PC-3 (cell line): ENCODE measurements at regions of chr7 and their contacts with region 1.

Region 1: DNA sequence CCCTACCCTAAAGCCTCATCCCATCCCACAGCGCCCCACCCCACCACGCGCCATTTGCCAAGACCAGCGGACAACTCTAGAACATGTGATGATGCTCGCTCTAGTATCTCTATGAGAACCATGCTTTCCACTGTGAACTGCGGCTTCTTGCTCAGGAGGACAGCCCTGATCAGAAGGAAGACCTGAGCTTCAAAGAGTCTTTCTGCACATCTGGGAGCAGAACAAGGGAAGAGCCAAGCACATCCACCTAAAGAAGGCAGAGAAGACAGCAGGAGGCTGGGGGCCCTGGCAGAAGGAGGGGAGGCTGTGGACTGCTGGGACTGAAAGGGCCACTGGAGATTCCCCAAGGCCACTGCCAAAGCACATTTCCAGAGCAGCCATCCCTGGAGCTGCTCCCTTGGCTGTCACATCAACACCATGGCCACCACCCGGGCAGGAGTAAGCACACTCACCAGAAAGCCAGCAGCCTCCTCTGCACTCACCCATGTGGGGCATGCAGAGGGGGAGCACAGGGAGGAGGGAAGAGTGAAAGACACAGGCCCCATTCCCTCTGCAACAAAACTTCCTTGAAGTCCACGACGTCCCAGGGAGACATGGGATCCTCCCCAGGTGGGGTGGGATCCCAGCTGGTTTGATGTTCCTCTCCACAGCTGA is 134.0 kb downstream of the TNS3 start:
- DNase-seq: no peak
- ATAC-seq: no peak
- H3K4me3 ChIP-seq: no peak overlapping the region
- H3K27ac ChIP-seq: no peak overlapping the region
- H3K4me1 ChIP-seq: peaks cover 25% of the 10 kb centered on the region
- H3K27me3 ChIP-seq: no peaks in the 10 kb centered on the region
- CTCF ChIP-seq: no peak

Region 2: GRCh38 chr7:47763063-47763974 is 315.5 kb after region 1 on chr7:
- CTCF ChIA-PET with region 1: no interaction called
- POLR2A ChIA-PET with region 1: interaction called, 12 read pairs
- intact Hi-C with region 1: no loop called
- DNase-seq: peak; percentile 90
- ATAC-seq: peak; percentile 90
- H3K4me3 ChIP-seq: peak overlapping the region; percentile 30; the same call in 1 of the 2 replicates
- H3K27ac ChIP-seq: peak overlapping the region; percentile 90
- H3K4me1 ChIP-seq: peaks cover 30% of the 10 kb centered on the region
- H3K27me3 ChIP-seq: no peaks in the 10 kb centered on the region
- CTCF ChIP-seq: no peak

Region 3: DNA sequence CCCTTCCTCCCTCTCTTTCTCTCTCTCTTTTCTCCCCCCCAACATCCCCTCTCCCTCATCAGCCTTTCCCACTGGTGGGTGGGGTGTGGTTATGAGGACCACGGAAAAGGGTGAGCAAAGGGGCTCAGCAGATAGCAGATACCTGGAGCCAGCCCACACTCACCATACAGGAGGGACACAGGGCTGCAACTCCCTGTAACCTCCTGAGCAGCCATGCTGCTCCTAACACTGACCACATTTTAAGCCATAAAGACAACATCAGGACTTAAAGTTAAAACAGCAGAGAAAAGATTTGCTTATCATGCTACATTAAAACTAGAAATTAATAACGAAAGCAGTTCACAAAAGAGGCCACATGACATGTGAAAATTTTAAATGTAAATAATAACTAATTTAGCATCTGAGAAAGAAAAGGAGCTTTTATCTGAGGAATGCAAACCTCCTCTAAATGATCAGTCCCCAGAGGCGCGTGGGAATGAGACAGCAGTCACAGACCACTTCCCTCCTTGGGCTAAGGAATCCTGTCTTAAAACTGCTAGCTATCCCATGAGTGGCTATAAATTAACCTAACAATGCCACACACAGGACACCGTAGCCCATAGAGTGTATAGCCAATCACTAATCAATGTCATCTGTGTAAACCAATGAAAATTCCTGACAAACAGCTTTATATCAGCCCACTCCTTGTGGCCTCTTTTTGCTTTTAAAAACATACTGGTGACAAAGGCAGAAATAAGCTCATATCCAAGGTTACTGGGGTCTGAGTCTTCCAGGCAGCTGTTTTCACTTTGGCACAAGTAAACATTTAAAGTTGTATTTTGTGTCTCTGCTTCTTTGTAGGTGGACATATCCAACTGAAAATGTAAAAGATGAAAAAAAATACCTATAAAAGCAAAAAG is 467.1 kb after region 1 on chr7:
- CTCF ChIA-PET with region 1: no interaction called
- POLR2A ChIA-PET with region 1: no interaction called
- intact Hi-C with region 1: no loop called
- DNase-seq: no peak
- ATAC-seq: no peak
- H3K4me3 ChIP-seq: no peak overlapping the region
- H3K27ac ChIP-seq: no peak overlapping the region
- H3K4me1 ChIP-seq: no peaks in the 10 kb centered on the region
- H3K27me3 ChIP-seq: no peaks in the 10 kb centered on the region
- CTCF ChIP-seq: no peak